CD8-positive, alpha-beta memory T cell (primary cell): ENCODE measurements at regions of chr12 and their contacts with region 1.

Region 1: DNA sequence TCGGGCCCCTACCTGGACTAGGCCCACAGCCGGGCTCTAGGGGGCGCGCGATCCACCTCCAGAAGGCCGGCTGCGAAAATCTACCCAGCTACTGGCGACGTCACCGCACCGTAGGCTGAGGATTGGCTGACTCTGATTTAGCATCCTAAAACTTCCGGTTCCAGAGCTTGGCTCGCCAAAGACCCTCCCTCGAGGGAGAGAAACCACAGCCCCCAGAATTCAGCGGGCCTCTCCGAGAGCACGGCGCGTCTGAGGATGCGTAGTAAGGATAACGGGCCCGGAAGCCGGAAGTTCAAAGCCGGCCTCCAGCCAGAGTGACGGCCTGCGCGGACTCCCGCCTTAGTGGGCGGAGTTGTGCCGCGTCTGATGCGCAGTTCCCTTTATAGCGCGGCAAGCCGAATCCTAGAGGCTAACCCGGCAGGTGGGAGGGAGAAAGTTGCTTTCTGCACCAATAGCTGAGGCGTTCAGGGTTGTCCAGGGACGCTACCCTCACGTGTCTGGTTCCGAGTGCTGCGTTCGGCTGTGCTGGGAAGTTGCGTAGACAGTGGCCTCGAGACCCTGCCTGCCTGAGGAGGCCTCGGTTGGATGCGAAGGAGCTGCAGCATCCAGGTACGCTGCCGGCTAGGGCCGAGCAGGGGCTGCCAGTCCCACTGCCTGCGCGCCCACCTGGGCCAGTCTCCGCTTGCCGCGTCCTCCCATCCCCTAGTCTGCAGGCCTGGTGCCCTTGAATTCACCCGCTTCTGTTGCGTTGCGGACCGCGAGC is at the start of gene COX14:
- DNase-seq: peak; percentile 98 to 100 (median 99)
- H3K4me3 ChIP-seq: peak within 1 kb of the TSS; percentile 91
- H3K4me3 Mint-ChIP-seq: peak within 1 kb of the TSS; percentile 94 to 99 (median 97)
- H3K27ac ChIP-seq: peak within 1 kb of the TSS; percentile 98
- H3K27ac Mint-ChIP-seq: peak within 1 kb of the TSS; percentile 96 to 100 (median 98)
- H3K4me1 ChIP-seq: peaks cover 29% of the 10 kb centered on the region
- H3K4me1 Mint-ChIP-seq: peaks cover 30 to 48% (median 41%) of the 10 kb centered on the region in 3 donors
- H3K27me3 ChIP-seq: no peaks in the 10 kb centered on the region
- H3K27me3 Mint-ChIP-seq: no peaks in the 10 kb centered on the region
- total RNA-seq, gene COX14: 58.7 to 59.2 TPM

Region 2: DNA sequence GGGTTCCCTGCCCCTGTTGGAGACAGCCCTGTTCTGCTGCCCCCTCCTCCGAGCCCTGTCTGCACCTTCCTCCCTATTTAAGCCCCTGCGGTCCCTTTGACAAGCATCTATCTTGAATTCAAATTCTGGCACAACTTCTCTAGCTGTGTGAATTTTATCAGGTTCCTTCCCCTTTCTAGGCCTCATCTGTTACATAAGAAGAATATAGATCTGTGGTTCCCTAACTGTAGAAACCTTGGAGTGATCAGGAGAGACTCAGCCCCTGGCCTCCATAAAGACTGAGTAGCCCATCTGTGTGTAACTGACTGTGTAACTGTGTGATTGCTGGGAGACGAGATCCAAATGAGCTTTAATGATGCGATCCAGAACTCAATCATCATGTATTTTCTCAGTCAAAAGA is 73.5 kb before region 1 on chr12:
- CTCF ChIA-PET with region 1: interaction called, 12 read pairs
- POLR2A ChIA-PET with region 1: no interaction called
- DNase-seq: no peak
- H3K4me3 ChIP-seq: no peak overlapping the region
- H3K4me3 Mint-ChIP-seq: no peak overlapping the region
- H3K27ac ChIP-seq: no peak overlapping the region
- H3K27ac Mint-ChIP-seq: peak overlapping the region in 1 of 8 donors; percentile 48
- H3K4me1 ChIP-seq: no peaks in the 10 kb centered on the region
- H3K4me1 Mint-ChIP-seq: no peaks in the 10 kb centered on the region
- H3K27me3 ChIP-seq: no peaks in the 10 kb centered on the region
- H3K27me3 Mint-ChIP-seq: peaks cover 7 to 13% of the 10 kb centered on the region in 2 donors

Region 3: GRCh38 chr12:50084775-50085614 is 26.9 kb before region 1 on chr12 and contains the start of gene SMARCD1:
- CTCF ChIA-PET with region 1: interaction called, 118 read pairs
- POLR2A ChIA-PET with region 1: interaction called, 48 read pairs
- DNase-seq: peak; percentile 75 to 88 (median 80)
- H3K4me3 ChIP-seq: peak within 1 kb of the TSS; percentile 76
- H3K4me3 Mint-ChIP-seq: peak within 1 kb of the TSS; percentile 94 to 97 (median 96)
- H3K27ac ChIP-seq: peak within 1 kb of the TSS; percentile 89
- H3K27ac Mint-ChIP-seq: peak within 1 kb of the TSS; percentile 95 to 98 (median 98)
- H3K4me1 ChIP-seq: peaks cover 18% of the 10 kb centered on the region
- H3K4me1 Mint-ChIP-seq: peaks cover 27 to 38% (median 29%) of the 10 kb centered on the region in 3 donors
- H3K27me3 ChIP-seq: no peaks in the 10 kb centered on the region
- H3K27me3 Mint-ChIP-seq: no peaks in the 10 kb centered on the region
- total RNA-seq, gene SMARCD1: 72.3 to 78.2 TPM

Region 4: DNA sequence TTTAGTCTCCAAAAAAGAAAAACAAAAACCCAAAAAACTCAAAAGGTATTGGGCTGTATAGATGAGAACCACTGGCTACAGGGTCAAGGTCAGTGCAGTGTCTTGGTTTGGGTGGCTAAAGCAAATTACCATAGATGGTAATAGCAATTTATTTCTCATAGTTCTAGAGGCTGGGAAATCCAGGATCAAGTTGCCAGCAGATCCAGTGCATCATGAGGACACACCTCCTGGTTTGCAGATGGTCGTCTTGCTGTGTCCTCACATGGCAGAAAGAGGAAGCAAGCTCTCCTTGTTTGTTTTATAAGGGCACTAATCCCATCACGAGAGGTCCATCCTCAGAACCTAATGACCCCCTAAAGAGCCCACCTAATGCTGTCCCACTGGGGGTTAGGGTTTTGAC is 11.3 kb after region 1 on chr12:
- CTCF ChIA-PET with region 1: interaction called, 69 read pairs
- POLR2A ChIA-PET with region 1: interaction called, 6 read pairs
- DNase-seq: no peak
- H3K4me3 ChIP-seq: no peak overlapping the region
- H3K4me3 Mint-ChIP-seq: no peak overlapping the region
- H3K27ac ChIP-seq: no peak overlapping the region
- H3K27ac Mint-ChIP-seq: peak overlapping the region in 4 of 8 donors; percentile 23 to 51 (median 30)
- H3K4me1 ChIP-seq: peaks cover 8% of the 10 kb centered on the region
- H3K4me1 Mint-ChIP-seq: peaks cover 35 to 72% (median 47%) of the 10 kb centered on the region in 3 donors
- H3K27me3 ChIP-seq: no peaks in the 10 kb centered on the region
- H3K27me3 Mint-ChIP-seq: peaks cover 0 to 2% of the 10 kb centered on the region in 2 donors

Region 5: DNA sequence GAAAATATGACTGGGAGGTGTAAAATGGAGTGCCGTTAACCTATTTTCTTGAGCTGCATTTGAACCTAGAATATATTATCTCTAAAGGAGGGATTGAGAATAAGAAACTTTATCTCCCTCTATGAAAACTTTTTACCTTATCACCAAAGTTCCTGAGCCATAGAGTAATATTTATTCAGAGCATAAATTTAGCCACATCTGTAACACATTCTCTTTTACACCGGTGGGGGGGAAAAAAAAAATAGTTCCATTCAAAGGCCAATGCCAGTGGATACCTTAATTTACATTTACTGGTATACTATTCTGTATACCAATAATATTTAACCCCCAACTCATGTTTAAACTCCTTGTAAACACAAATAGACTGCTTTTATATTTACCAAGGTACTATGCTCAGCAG is 33.6 kb after region 1 on chr12:
- CTCF ChIA-PET with region 1: interaction called, 10 read pairs
- POLR2A ChIA-PET with region 1: interaction called, 3 read pairs
- DNase-seq: no peak
- H3K4me3 ChIP-seq: no peak overlapping the region
- H3K4me3 Mint-ChIP-seq: no peak overlapping the region
- H3K27ac ChIP-seq: no peak overlapping the region
- H3K27ac Mint-ChIP-seq: peak overlapping the region in 1 of 8 donors; percentile 33
- H3K4me1 ChIP-seq: no peaks in the 10 kb centered on the region
- H3K4me1 Mint-ChIP-seq: peaks cover 13 to 30% (median 20%) of the 10 kb centered on the region in 3 donors
- H3K27me3 ChIP-seq: no peaks in the 10 kb centered on the region
- H3K27me3 Mint-ChIP-seq: no peaks in the 10 kb centered on the region

Region 6: GRCh38 chr12:50167041-50167828 is 55.4 kb after region 1 on chr12 and contains the start of gene CERS5:
- CTCF ChIA-PET with region 1: interaction called, 38 read pairs
- POLR2A ChIA-PET with region 1: interaction called, 50 read pairs
- DNase-seq: peak; percentile 96 to 98 (median 97)
- H3K4me3 ChIP-seq: peak within 1 kb of the TSS; percentile 90
- H3K4me3 Mint-ChIP-seq: peak within 1 kb of the TSS; percentile 87 to 97 (median 95)
- H3K27ac ChIP-seq: peak within 1 kb of the TSS; percentile 88
- H3K27ac Mint-ChIP-seq: peak within 1 kb of the TSS; percentile 87 to 98 (median 97)
- H3K4me1 ChIP-seq: peaks cover 25% of the 10 kb centered on the region
- H3K4me1 Mint-ChIP-seq: peaks cover 21 to 37% (median 32%) of the 10 kb centered on the region in 3 donors
- H3K27me3 ChIP-seq: no peaks in the 10 kb centered on the region
- H3K27me3 Mint-ChIP-seq: no peaks in the 10 kb centered on the region
- total RNA-seq, gene CERS5: 55.4 to 62.1 TPM

Region 7: GRCh38 chr12:50246873-50247612 is 135.2 kb after region 1 on chr12:
- CTCF ChIA-PET with region 1: no interaction called
- POLR2A ChIA-PET with region 1: no interaction called
- DNase-seq: no peak
- H3K4me3 ChIP-seq: no peak overlapping the region
- H3K4me3 Mint-ChIP-seq: no peak overlapping the region
- H3K27ac ChIP-seq: no peak overlapping the region
- H3K27ac Mint-ChIP-seq: peak overlapping the region in 1 of 8 donors; percentile 85
- H3K4me1 ChIP-seq: no peaks in the 10 kb centered on the region
- H3K4me1 Mint-ChIP-seq: peaks cover 1 to 11% (median 9%) of the 10 kb centered on the region in 3 donors
- H3K27me3 ChIP-seq: no peaks in the 10 kb centered on the region
- H3K27me3 Mint-ChIP-seq: peaks cover 0 to 1% of the 10 kb centered on the region in 2 donors

Region 8: GRCh38 chr12:50763639-50764285 is 651.9 kb after region 1 on chr12 and contains the start of gene ATF1:
- CTCF ChIA-PET with region 1: no interaction called
- POLR2A ChIA-PET with region 1: interaction called, 11 read pairs
- DNase-seq: peak; percentile 82 to 93 (median 89)
- H3K4me3 ChIP-seq: peak within 1 kb of the TSS; percentile 86
- H3K4me3 Mint-ChIP-seq: peak within 1 kb of the TSS; percentile 85 to 98 (median 89)
- H3K27ac ChIP-seq: peak within 1 kb of the TSS; percentile 89
- H3K27ac Mint-ChIP-seq: peak within 1 kb of the TSS; percentile 95 to 98 (median 96)
- H3K4me1 ChIP-seq: peaks cover 21% of the 10 kb centered on the region
- H3K4me1 Mint-ChIP-seq: peaks cover 26 to 49% (median 41%) of the 10 kb centered on the region in 3 donors
- H3K27me3 ChIP-seq: no peaks in the 10 kb centered on the region
- H3K27me3 Mint-ChIP-seq: peaks cover 0 to 3% of the 10 kb centered on the region in 2 donors
- total RNA-seq, gene ATF1: 50.8 to 54.0 TPM